Naive thymus-derived CD4-positive, alpha-beta T cell (primary cell): ENCODE measurements at regions of chr12 and their contacts with region 1.

Region 1: DNA sequence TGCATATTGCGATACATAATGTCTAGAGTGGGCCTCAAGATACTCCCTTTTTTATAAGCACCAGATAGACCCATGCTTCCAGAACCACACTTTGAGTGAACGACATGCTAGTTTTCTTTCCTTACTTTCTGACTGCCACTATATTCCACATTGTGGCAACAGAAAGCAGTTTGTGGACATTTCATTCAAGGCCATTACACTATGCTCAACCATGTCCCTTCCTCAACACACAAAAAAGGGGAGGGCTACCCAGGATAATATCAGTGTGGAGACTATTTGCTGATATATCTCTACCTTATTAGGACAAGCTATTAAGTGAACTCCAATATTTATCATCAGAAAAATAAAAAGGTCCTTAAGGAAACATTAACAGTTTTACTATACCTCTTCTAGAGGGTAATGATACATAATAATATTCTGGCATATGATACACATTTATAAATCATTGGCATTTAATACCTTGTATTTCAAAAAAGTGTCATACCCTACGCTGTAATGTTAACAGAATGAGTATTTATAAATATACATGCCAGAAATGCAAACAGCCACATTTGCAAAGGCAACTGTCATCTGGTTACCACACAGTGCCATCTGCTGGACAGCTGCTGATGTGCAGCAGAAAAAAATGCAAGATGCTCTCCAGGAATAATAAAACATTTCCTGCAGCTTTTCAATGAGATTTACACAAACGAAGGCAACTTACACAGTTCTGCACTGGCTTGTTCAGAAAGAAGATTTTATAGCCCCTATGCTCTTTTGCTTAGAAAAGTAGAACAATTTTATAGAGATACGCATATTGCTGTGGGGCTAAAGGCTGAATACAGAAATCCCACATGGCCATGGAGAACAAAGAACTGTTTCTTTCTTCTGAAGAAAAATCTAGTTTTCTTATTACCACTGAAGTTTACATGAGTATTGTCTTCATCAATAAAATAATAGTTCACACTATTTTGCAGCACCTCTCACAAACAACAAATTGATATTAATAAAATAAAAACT is 182.2 kb upstream of the GRIP1 start:
- DNase-seq: peak; percentile 27 to 69 (median 57)
- ATAC-seq: peak; percentile 78
- H3K4me3 ChIP-seq: no peak overlapping the region
- H3K4me3 Mint-ChIP-seq: no peak overlapping the region
- H3K27ac ChIP-seq: no peak overlapping the region
- H3K27ac Mint-ChIP-seq: no peak overlapping the region
- H3K4me1 ChIP-seq: no peaks in the 10 kb centered on the region
- H3K4me1 Mint-ChIP-seq: peaks cover 4 to 24% (median 14%) of the 10 kb centered on the region in 7 donors
- H3K27me3 ChIP-seq: no peaks in the 10 kb centered on the region
- H3K27me3 Mint-ChIP-seq: peaks cover 0 to 11% (median 9%) of the 10 kb centered on the region in 5 donors

Region 2: GRCh38 chr12:66269757-66270383 is 591.2 kb before region 1 on chr12:
- CTCF ChIA-PET with region 1: interaction called, 3 read pairs
- POLR2A ChIA-PET with region 1: no interaction called
- intact Hi-C with region 1: loop called (anchors 1 to 10 kb)
- DNase-seq: peak in 7 of 9 donors; percentile 20 to 62 (median 52)
- ATAC-seq: peak; percentile 72
- H3K4me3 ChIP-seq: no peak overlapping the region
- H3K4me3 Mint-ChIP-seq: no peak overlapping the region
- H3K27ac ChIP-seq: no peak overlapping the region
- H3K27ac Mint-ChIP-seq: peak overlapping the region in 1 of 9 donors; percentile 55
- H3K4me1 ChIP-seq: peaks cover 0 to 13% of the 10 kb centered on the region in 2 donors
- H3K4me1 Mint-ChIP-seq: peaks cover 6 to 22% (median 9%) of the 10 kb centered on the region in 7 donors
- H3K27me3 ChIP-seq: no peaks in the 10 kb centered on the region
- H3K27me3 Mint-ChIP-seq: no peaks in the 10 kb centered on the region

Region 3: GRCh38 chr12:66352197-66352596 is 508.9 kb before region 1 on chr12:
- CTCF ChIA-PET with region 1: no interaction called
- POLR2A ChIA-PET with region 1: no interaction called
- intact Hi-C with region 1: loop called in 1 of 2 experiments (anchors 5 kb)
- DNase-seq: no peak
- ATAC-seq: peak; percentile 34
- H3K4me3 ChIP-seq: no peak overlapping the region
- H3K4me3 Mint-ChIP-seq: no peak overlapping the region
- H3K27ac ChIP-seq: no peak overlapping the region
- H3K27ac Mint-ChIP-seq: peak overlapping the region in 4 of 9 donors; percentile 42 to 75 (median 58)
- H3K4me1 ChIP-seq: no peaks in the 10 kb centered on the region
- H3K4me1 Mint-ChIP-seq: peaks cover 0 to 7% (median 0%) of the 10 kb centered on the region in 7 donors
- H3K27me3 ChIP-seq: no peaks in the 10 kb centered on the region
- H3K27me3 Mint-ChIP-seq: no peaks in the 10 kb centered on the region

Region 4: GRCh38 chr12:66688846-66689439 is 172.1 kb before region 1 on chr12:
- CTCF ChIA-PET with region 1: interaction called, 29 read pairs
- POLR2A ChIA-PET with region 1: no interaction called
- intact Hi-C with region 1: loop called (anchors 1 kb)
- DNase-seq: peak in 8 of 9 donors; percentile 9 to 52 (median 31)
- ATAC-seq: peak; percentile 64
- H3K4me3 ChIP-seq: no peak overlapping the region
- H3K4me3 Mint-ChIP-seq: no peak overlapping the region
- H3K27ac ChIP-seq: no peak overlapping the region
- H3K27ac Mint-ChIP-seq: no peak overlapping the region
- H3K4me1 ChIP-seq: no peaks in the 10 kb centered on the region
- H3K4me1 Mint-ChIP-seq: peaks cover 2 to 5% (median 3%) of the 10 kb centered on the region in 7 donors
- H3K27me3 ChIP-seq: no peaks in the 10 kb centered on the region
- H3K27me3 Mint-ChIP-seq: peaks cover 0 to 22% (median 9%) of the 10 kb centered on the region in 5 donors

Region 5: DNA sequence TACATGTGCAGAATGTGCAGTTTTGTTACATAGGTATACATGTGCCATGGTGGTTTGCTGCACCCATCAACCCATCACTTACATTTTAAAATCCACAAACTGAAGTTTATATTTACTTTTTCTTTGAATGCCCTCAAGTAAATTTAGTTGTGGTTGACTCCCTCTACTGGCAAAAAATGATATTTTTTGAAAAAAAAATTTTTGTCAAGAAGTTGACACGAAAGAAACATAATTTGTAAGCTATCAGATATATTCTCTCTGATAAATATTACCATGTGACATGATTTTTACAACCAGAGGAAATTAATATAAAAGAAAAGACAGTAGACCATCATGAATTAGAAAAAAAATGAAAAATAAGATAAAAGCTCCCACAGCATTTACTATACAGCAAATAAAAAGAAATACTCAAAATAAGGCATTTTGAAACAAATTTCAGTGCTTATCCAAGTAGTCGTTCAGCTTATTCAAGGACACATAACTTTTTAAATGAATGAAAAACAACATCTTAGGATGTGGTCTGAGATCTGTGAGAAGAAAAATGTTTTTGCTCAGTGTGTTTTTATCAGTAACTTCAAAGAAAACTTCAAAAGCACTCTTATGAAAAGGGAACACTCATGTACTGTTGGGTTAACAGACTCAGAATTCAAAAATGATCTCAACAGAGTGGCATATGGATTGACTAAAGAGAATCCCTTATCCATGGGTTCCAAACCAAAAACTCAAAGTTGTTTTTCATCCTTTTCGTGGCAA is 152.2 kb before region 1 on chr12:
- CTCF ChIA-PET with region 1: interaction called, 7 read pairs
- POLR2A ChIA-PET with region 1: interaction called, 6 read pairs
- intact Hi-C with region 1: loop called (anchors 1 to 2 kb)
- DNase-seq: peak in 6 of 9 donors; percentile 54 to 77 (median 65)
- ATAC-seq: peak; percentile 86
- H3K4me3 ChIP-seq: no peak overlapping the region
- H3K4me3 Mint-ChIP-seq: peak overlapping the region; percentile 18 to 84 (median 71)
- H3K27ac ChIP-seq: peak overlapping the region; percentile 45
- H3K27ac Mint-ChIP-seq: peak overlapping the region in 8 of 9 donors; percentile 40 to 95 (median 91)
- H3K4me1 ChIP-seq: peaks cover 0 to 29% of the 10 kb centered on the region in 2 donors
- H3K4me1 Mint-ChIP-seq: peaks cover 9 to 65% (median 51%) of the 10 kb centered on the region in 7 donors
- H3K27me3 ChIP-seq: no peaks in the 10 kb centered on the region
- H3K27me3 Mint-ChIP-seq: peaks cover 0 to 36% (median 0%) of the 10 kb centered on the region in 5 donors

Region 6: GRCh38 chr12:66829660-66830325 is 31.3 kb before region 1 on chr12:
- CTCF ChIA-PET with region 1: interaction called, 3 read pairs
- POLR2A ChIA-PET with region 1: no interaction called
- intact Hi-C with region 1: loop called in 1 of 2 experiments (anchors 1 kb)
- DNase-seq: peak in 5 of 9 donors; percentile 22 to 39 (median 30)
- ATAC-seq: peak; percentile 78
- H3K4me3 ChIP-seq: no peak overlapping the region
- H3K4me3 Mint-ChIP-seq: peak overlapping the region; percentile 22 to 79 (median 68)
- H3K27ac ChIP-seq: no peak overlapping the region
- H3K27ac Mint-ChIP-seq: peak overlapping the region; percentile 40 to 93 (median 76)
- H3K4me1 ChIP-seq: peaks cover 6 to 31% of the 10 kb centered on the region in 2 donors
- H3K4me1 Mint-ChIP-seq: peaks cover 9 to 56% (median 50%) of the 10 kb centered on the region in 7 donors
- H3K27me3 ChIP-seq: no peaks in the 10 kb centered on the region
- H3K27me3 Mint-ChIP-seq: peaks cover 0 to 4% (median 0%) of the 10 kb centered on the region in 5 donors

Region 7: DNA sequence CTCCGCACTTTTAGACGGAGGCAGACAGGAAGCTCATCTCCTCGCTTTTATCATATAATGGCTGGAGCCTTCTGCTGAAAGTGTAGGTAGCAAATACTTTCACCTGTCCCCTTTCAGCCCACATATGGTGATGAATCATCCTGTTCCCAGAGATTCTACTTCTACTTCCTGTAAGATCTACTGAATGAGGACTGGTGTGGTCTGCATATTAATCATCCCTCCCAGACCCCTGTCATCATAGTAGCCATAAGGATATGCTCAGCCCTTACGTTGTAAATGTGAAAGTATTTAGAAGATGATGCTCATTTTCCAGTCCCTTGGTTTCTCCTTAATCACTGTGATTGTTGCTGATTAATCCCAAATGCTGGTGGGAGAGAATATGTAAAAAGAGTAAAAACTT is 86.1 kb after region 1 on chr12:
- CTCF ChIA-PET with region 1: no interaction called
- POLR2A ChIA-PET with region 1: no interaction called
- intact Hi-C with region 1: no loop called
- DNase-seq: no peak
- ATAC-seq: no peak
- H3K4me3 ChIP-seq: no peak overlapping the region
- H3K4me3 Mint-ChIP-seq: no peak overlapping the region
- H3K27ac ChIP-seq: no peak overlapping the region
- H3K27ac Mint-ChIP-seq: no peak overlapping the region
- H3K4me1 ChIP-seq: no peaks in the 10 kb centered on the region
- H3K4me1 Mint-ChIP-seq: peaks cover 2 to 13% (median 8%) of the 10 kb centered on the region in 7 donors
- H3K27me3 ChIP-seq: peaks cover 0 to 3% of the 10 kb centered on the region in 2 donors
- H3K27me3 Mint-ChIP-seq: peaks cover 0 to 19% (median 0%) of the 10 kb centered on the region in 5 donors